ENCODE measurements at regions of chr9 and their contacts with region 1.

Region 1: GRCh38 chr9:133042676-133043075 is 11.9 kb downstream of the GTF3C5 start:
- DNase-seq: no peak
- H3K4me3 ChIP-seq: no peak overlapping the region
- H3K27ac ChIP-seq: no peak overlapping the region
- H3K4me1 ChIP-seq: no peaks in the 10 kb centered on the region
- H3K27me3 ChIP-seq: no peaks in the 10 kb centered on the region

Region 2: GRCh38 chr9:133030317-133031129 is 12.2 kb before region 1 on chr9 and contains the start of gene GTF3C5:
- CTCF ChIA-PET with region 1: interaction called, 14 read pairs
- POLR2A ChIA-PET with region 1: interaction called, 4 read pairs
- DNase-seq: peak; percentile 99
- H3K4me3 ChIP-seq: peak within 1 kb of the TSS; percentile 91 to 100 (median 92)
- H3K27ac ChIP-seq: peak within 1 kb of the TSS; percentile 83 to 93
- H3K4me1 ChIP-seq: peaks cover 5 to 37% (median 30%) of the 10 kb centered on the region in 4 experiments
- H3K27me3 ChIP-seq: no peaks in the 10 kb centered on the region

Region 3: GRCh38 chr9:133225171-133226011 is 182.7 kb after region 1 on chr9:
- CTCF ChIA-PET with region 1: no interaction called
- POLR2A ChIA-PET with region 1: no interaction called
- DNase-seq: no peak
- H3K4me3 ChIP-seq: no peak overlapping the region
- H3K27ac ChIP-seq: no peak overlapping the region
- H3K4me1 ChIP-seq: peaks cover 0 to 9% (median 3%) of the 10 kb centered on the region in 4 experiments
- H3K27me3 ChIP-seq: no peaks in the 10 kb centered on the region

Measured in common myeloid progenitor, CD34-positive (primary cell).